CD8-positive, alpha-beta T cell (primary cell): ENCODE measurements at regions of chr16 and their contacts with region 1.

Region 1: DNA sequence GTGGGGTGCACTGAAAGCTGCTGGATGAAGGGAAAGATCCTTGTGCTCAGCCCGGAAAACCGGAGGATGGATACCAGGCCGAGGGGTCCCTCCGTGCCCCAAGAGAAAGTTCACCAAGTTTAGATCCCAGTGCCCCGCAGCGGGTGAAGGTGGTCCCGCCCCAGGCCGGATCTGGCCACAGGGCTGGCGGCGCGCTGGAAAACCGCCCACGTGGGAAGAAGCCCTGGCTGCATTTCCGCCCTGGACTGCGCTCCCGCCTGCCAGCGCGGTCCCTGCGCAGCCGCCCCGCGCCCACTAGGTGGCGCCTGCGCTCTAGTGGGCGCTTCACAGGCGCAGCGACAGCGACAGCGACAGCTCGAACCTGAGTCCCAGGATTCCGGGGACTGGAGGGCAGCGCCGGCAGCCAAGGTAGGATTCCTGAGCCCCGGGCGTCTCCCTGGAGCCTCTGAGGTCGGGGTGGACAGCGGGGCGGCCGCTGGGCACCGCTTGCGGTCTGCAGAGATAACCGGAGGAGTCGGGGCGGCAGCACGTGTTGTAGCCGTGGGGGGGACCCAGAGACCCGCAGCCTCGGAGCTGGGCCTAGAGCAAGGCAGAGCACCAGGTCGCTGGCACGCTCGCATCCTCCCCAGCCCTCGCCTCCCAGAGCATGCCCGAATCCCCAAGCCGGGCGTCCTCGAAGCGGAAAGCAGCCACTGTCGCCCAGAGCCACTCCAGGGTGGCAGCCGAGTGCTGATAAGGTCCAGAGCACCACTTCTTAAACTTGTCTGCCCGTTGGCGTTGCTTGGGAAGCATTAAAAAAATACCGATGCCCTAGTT is at the start of gene CHD9:
- DNase-seq: peak; percentile 53 to 89 (median 72)
- ATAC-seq: peak; percentile 91
- H3K4me3 ChIP-seq: peak within 1 kb of the TSS; percentile 78 to 86
- H3K4me3 Mint-ChIP-seq: peak within 1 kb of the TSS; percentile 87
- H3K27ac ChIP-seq: peak within 1 kb of the TSS; percentile 37 to 61
- H3K27ac Mint-ChIP-seq: peak within 1 kb of the TSS; percentile 77
- H3K4me1 ChIP-seq: peaks cover 18% of the 10 kb centered on the region
- H3K4me1 Mint-ChIP-seq: peaks cover 30% of the 10 kb centered on the region
- H3K27me3 ChIP-seq: no peaks in the 10 kb centered on the region
- H3K27me3 Mint-ChIP-seq: no peaks in the 10 kb centered on the region
- CTCF ChIP-seq: peak; percentile 97
- total RNA-seq, gene CHD9: 23.2 to 23.5 TPM

Region 2: GRCh38 chr16:53071748-53072301 is 16.9 kb after region 1 on chr16:
- CTCF ChIA-PET with region 1: interaction called, 31 read pairs
- POLR2A ChIA-PET with region 1: interaction called, 4 read pairs
- intact Hi-C with region 1: no loop called
- DNase-seq: no peak
- ATAC-seq: no peak
- H3K4me3 ChIP-seq: no peak overlapping the region
- H3K4me3 Mint-ChIP-seq: peak overlapping the region; percentile 49
- H3K27ac ChIP-seq: no peak overlapping the region
- H3K27ac Mint-ChIP-seq: no peak overlapping the region
- H3K4me1 ChIP-seq: peaks cover 32% of the 10 kb centered on the region
- H3K4me1 Mint-ChIP-seq: peaks cover 44% of the 10 kb centered on the region
- H3K27me3 ChIP-seq: no peaks in the 10 kb centered on the region
- H3K27me3 Mint-ChIP-seq: no peaks in the 10 kb centered on the region
- CTCF ChIP-seq: no peak

Region 3: DNA sequence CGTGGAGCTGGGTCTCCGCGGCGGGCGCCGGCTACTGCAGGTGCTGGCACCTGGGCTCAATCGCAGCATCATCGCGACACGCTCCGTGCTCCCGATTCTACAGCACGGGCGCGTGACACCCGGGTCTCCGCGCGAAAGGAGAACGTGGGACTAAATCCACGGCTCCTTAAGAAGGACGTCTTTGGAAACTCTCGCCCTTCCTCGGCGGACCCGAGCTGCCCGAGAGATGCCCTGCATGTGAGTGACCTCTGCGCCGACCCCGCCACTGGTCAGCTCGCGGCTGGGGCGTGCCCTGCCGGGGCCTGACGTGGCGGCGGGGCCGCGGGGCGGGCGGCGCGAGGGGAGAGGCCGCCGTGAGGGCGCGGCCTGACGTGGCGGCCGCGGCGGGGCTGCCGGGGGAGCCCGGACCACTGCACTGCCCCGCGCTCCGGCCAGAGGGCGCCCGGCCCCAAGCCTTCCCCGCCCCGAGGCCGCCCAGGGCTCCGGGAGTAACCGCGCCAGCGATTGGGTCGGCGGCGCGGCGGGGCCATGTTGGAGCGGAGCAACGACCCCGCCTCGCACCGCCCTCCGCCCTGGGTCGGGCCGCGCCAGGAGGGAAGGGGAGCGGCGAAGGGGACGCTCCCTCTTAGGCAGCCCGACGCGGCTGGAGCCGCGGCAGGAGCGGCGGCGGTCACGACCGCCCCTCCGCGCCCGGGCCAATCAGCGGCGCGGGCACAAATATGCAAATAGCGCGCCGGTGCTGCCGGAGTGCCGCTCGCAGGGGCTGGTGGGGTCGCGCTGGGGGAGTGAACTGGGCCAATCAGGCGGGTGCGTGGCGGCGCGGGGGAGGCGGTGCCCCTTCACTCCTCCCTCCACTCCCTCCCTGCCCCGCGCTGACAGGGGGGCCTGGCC is 75.5 kb after region 1 on chr16:
- CTCF ChIA-PET with region 1: interaction called, 17 read pairs
- POLR2A ChIA-PET with region 1: interaction called, 6 read pairs
- intact Hi-C with region 1: loop called (anchors 1 kb)
- DNase-seq: peak; percentile 88 to 97 (median 96)
- ATAC-seq: peak; percentile 91
- H3K4me3 ChIP-seq: peak overlapping the region; percentile 76 to 92
- H3K4me3 Mint-ChIP-seq: peak overlapping the region; percentile 84
- H3K27ac ChIP-seq: peak overlapping the region; percentile 52 to 66
- H3K27ac Mint-ChIP-seq: peak overlapping the region; percentile 86
- H3K4me1 ChIP-seq: no peaks in the 10 kb centered on the region
- H3K4me1 Mint-ChIP-seq: peaks cover 20% of the 10 kb centered on the region
- H3K27me3 ChIP-seq: no peaks in the 10 kb centered on the region
- H3K27me3 Mint-ChIP-seq: no peaks in the 10 kb centered on the region
- CTCF ChIP-seq: no peak

Region 4: DNA sequence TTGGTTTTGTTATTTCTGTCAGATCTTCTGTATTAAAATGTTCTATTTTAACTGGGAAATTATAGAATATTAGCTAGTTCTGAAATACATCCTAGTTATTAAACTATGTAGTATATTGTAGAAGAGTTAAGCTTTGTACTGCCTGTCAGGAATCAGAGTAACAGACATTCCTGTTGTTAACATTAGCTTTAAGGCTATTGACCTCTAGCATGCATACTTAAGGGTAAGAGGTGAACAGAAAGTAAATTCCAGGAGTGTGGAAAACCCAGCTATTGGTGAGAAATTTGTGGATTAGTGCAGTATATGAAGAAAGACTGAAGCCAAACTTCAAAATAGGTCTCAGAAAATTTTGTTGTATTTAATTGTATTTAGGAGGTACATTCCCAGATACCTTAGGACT is 111.2 kb after region 1 on chr16:
- CTCF ChIA-PET with region 1: interaction called, 103 read pairs
- POLR2A ChIA-PET with region 1: interaction called, 4 read pairs
- intact Hi-C with region 1: no loop called
- DNase-seq: no peak
- ATAC-seq: no peak
- H3K4me3 ChIP-seq: no peak overlapping the region
- H3K4me3 Mint-ChIP-seq: no peak overlapping the region
- H3K27ac ChIP-seq: no peak overlapping the region
- H3K27ac Mint-ChIP-seq: no peak overlapping the region
- H3K4me1 ChIP-seq: no peaks in the 10 kb centered on the region
- H3K4me1 Mint-ChIP-seq: peaks cover 16% of the 10 kb centered on the region
- H3K27me3 ChIP-seq: no peaks in the 10 kb centered on the region
- H3K27me3 Mint-ChIP-seq: no peaks in the 10 kb centered on the region
- CTCF ChIP-seq: no peak

Region 5: DNA sequence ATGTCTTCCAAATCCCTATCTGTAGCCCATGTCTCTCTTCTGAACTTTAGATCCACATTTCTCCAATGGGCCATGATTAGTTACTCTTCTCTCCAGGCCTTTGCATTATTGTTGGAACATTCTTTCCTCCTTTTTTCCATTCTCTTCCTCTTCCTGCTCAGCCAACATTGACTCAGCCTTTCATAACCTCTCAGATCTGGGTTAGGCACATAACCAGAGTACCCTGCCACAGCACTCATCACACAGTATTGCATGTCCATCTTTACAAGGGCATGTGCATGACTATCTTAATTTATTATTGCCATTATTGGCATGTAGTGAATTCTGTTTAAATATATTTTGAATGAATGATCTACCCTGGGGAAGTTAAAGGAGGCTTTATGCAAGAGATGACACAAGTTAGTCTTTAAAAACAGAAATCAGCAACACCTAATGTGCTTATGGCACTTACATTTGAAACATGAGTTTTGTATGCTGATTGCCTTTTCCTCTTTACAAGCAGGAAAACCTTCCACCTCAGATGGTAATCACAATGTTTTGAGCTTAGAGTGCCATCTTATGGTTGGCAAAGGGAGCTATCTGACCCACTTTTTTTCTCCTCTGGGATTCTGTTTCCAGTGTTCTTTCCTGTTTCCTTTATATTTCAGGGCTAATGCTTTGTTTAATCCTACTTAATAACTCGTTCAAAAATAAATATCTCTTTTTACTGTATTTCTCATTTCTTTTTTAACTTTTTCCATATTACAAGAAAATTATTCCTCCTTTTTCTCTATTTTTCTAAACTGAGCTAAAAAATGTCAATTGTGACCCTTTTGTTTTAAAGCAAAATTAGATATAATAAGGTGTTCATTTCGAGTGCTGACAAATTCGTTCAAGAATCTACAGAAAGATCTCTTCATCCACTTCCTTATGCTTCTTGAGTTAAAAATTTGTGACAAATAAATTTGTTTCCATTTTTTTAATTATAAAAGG is 228.4 kb after region 1 on chr16:
- CTCF ChIA-PET with region 1: interaction called, 17 read pairs
- POLR2A ChIA-PET with region 1: no interaction called
- intact Hi-C with region 1: loop called (anchors 1 to 2 kb)
- DNase-seq: peak in 2 of 9 experiments; percentile 38 to 53
- ATAC-seq: no peak
- H3K4me3 ChIP-seq: no peak overlapping the region
- H3K4me3 Mint-ChIP-seq: no peak overlapping the region
- H3K27ac ChIP-seq: no peak overlapping the region
- H3K27ac Mint-ChIP-seq: no peak overlapping the region
- H3K4me1 ChIP-seq: no peaks in the 10 kb centered on the region
- H3K4me1 Mint-ChIP-seq: no peaks in the 10 kb centered on the region
- H3K27me3 ChIP-seq: no peaks in the 10 kb centered on the region
- H3K27me3 Mint-ChIP-seq: no peaks in the 10 kb centered on the region
- CTCF ChIP-seq: peak; percentile 47

Region 6: DNA sequence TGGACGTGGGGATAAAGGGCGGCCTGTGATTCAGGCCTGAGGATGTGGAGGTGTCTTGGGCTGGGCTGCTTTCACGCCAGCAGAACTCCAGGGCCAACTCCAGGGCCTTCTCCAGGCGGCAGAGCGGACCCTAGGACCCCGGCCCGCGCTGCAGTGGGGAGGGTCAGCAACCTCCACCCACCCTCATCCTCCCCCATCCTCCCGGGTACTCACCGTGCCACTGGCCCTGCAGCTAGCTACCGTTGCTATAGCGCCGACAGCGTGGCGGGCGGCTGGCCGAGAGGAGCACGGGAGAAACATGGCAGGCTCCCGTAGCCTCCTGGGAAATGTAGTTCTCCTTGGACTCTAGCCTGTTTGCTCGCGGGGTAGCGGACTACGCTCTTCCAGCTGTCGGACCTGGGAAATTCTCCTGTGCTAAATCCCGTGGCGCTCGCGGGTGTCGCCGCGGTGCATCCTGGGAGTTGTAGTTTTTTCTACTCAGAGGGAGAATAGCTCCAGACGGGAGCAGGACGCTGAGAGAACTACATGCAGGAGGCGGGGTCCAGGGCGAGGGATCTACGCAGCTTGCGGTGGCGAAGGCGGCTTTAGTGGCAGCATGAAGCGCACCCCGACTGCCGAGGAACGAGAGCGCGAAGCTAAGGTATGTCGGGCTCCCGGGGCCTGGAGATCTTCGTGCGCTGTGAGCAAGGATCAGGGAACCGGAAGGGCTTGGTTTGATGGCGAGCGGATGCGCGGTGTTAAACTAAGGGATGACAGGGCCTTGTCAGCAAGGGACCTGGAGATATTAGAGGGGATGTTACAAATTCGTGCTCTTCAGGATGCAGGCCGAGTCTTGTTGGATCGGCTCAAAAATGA is 648.9 kb after region 1 on chr16 and contains the starts of genes FTO and RPGRIP1L:
- CTCF ChIA-PET with region 1: no interaction called
- POLR2A ChIA-PET with region 1: no interaction called
- intact Hi-C with region 1: loop called in 1 of 2 experiments (anchors 10 kb)
- DNase-seq: peak; percentile 89 to 98 (median 95)
- ATAC-seq: peak; percentile 90
- H3K4me3 ChIP-seq: peak within 1 kb of the TSS; percentile 75 to 86
- H3K4me3 Mint-ChIP-seq: peak within 1 kb of the TSS; percentile 96
- H3K27ac ChIP-seq: peak within 1 kb of the TSS; percentile 61 to 68
- H3K27ac Mint-ChIP-seq: peak within 1 kb of the TSS; percentile 95
- H3K4me1 ChIP-seq: peaks cover 21% of the 10 kb centered on the region
- H3K4me1 Mint-ChIP-seq: peaks cover 48% of the 10 kb centered on the region
- H3K27me3 ChIP-seq: no peaks in the 10 kb centered on the region
- H3K27me3 Mint-ChIP-seq: no peaks in the 10 kb centered on the region
- CTCF ChIP-seq: no peak
- total RNA-seq, gene FTO: 30.4 to 32.9 TPM
- total RNA-seq, gene RPGRIP1L: 1.5 to 2.2 TPM